BJ (cell line): ENCODE measurements at regions of chr14 and their contacts with region 1.

Region 1: GRCh38 chr14:69247676-69248440 is 12.1 kb upstream of the GALNT16 start:
- DNase-seq: peak; percentile 92
- H3K4me3 ChIP-seq: no peak overlapping the region
- H3K27me3 ChIP-seq: no peaks in the 10 kb centered on the region
- CTCF ChIP-seq: peak; percentile 45; the same call in 1 of the 2 replicates

Region 2: GRCh38 chr14:69260861-69261564 is 13.2 kb after region 1 on chr14:
- CTCF ChIA-PET with region 1: interaction called, 17 read pairs
- POLR2A ChIA-PET with region 1: no interaction called
- DNase-seq: no peak
- H3K4me3 ChIP-seq: peak overlapping the region; percentile 46
- H3K27me3 ChIP-seq: peaks cover 28% of the 10 kb centered on the region
- CTCF ChIP-seq: peak; percentile 51

Region 3: GRCh38 chr14:69363055-69363454 is 115.2 kb after region 1 on chr14:
- CTCF ChIA-PET with region 1: interaction called, 29 read pairs
- POLR2A ChIA-PET with region 1: no interaction called
- DNase-seq: no peak
- H3K4me3 ChIP-seq: no peak overlapping the region
- H3K27me3 ChIP-seq: no peaks in the 10 kb centered on the region; the same call in 1 of the 2 replicates
- CTCF ChIP-seq: peak; percentile 66